Activated B cell treated with CpG ODN at 0.5 μM for 24 hours (primary cell): ENCODE measurements at regions of chrX and their contacts with region 1.

Region 1: GRCh38 chrX:79138658-79139241 is 5.7 kb upstream of the GPR174 start:
- DNase-seq: no peak
- ATAC-seq: peak; percentile 89
- H3K4me3 Mint-ChIP-seq: peak overlapping the region; percentile 55
- H3K27ac Mint-ChIP-seq: peak overlapping the region; percentile 91
- H3K4me1 Mint-ChIP-seq: peaks cover 57% of the 10 kb centered on the region
- H3K27me3 Mint-ChIP-seq: no peaks in the 10 kb centered on the region
- CTCF ChIP-seq: no peak

Region 2: GRCh38 chrX:79089896-79090584 is 48.7 kb before region 1 on chrX:
- CTCF ChIA-PET with region 1: no interaction called
- POLR2A ChIA-PET with region 1: interaction called, 3 read pairs
- intact Hi-C with region 1: loop called (anchors 2 kb)
- DNase-seq: no peak
- ATAC-seq: peak; percentile 74
- H3K4me3 Mint-ChIP-seq: peak overlapping the region; percentile 19
- H3K27ac Mint-ChIP-seq: peak overlapping the region; percentile 80
- H3K4me1 Mint-ChIP-seq: peaks cover 30% of the 10 kb centered on the region
- H3K27me3 Mint-ChIP-seq: no peaks in the 10 kb centered on the region
- CTCF ChIP-seq: no peak

Region 3: GRCh38 chrX:79117078-79117477 is 21.7 kb before region 1 on chrX:
- CTCF ChIA-PET with region 1: interaction called, 4 read pairs
- POLR2A ChIA-PET with region 1: no interaction called
- intact Hi-C with region 1: loop called (anchors 2 kb)
- DNase-seq: no peak
- ATAC-seq: peak; percentile 25
- H3K4me3 Mint-ChIP-seq: no peak overlapping the region
- H3K27ac Mint-ChIP-seq: no peak overlapping the region
- H3K4me1 Mint-ChIP-seq: peaks cover 6% of the 10 kb centered on the region
- H3K27me3 Mint-ChIP-seq: no peaks in the 10 kb centered on the region
- CTCF ChIP-seq: no peak

Region 4: GRCh38 chrX:79176028-79176427 is 37.3 kb after region 1 on chrX:
- CTCF ChIA-PET with region 1: no interaction called
- POLR2A ChIA-PET with region 1: no interaction called
- intact Hi-C with region 1: loop called (anchors 5 kb)
- DNase-seq: no peak
- ATAC-seq: peak; percentile 34
- H3K4me3 Mint-ChIP-seq: peak overlapping the region; percentile 47
- H3K27ac Mint-ChIP-seq: peak overlapping the region; percentile 86
- H3K4me1 Mint-ChIP-seq: peaks cover 54% of the 10 kb centered on the region
- H3K27me3 Mint-ChIP-seq: no peaks in the 10 kb centered on the region
- CTCF ChIP-seq: no peak